ENCODE measurements at regions of chr11 and their contacts with region 1.

Region 1: GRCh38 chr11:87803748-87804147 is 371.5 kb downstream of the RAB38 start:
- DNase-seq: no peak
- ATAC-seq: no peak
- H3K4me3 ChIP-seq: no peak overlapping the region
- H3K27ac ChIP-seq: no peak overlapping the region
- H3K4me1 ChIP-seq: no peaks in the 10 kb centered on the region
- H3K27me3 ChIP-seq: no peaks in the 10 kb centered on the region

Region 2: GRCh38 chr11:87889126-87889525 is 85.4 kb after region 1 on chr11:
- intact Hi-C with region 1: loop called in 1 of 2 experiments (anchors 10 kb)
- DNase-seq: no peak
- ATAC-seq: no peak
- H3K4me3 ChIP-seq: no peak overlapping the region
- H3K27ac ChIP-seq: no peak overlapping the region
- H3K4me1 ChIP-seq: no peaks in the 10 kb centered on the region
- H3K27me3 ChIP-seq: no peaks in the 10 kb centered on the region